ENCODE measurements at regions of chr2 and their contacts with region 1.

Region 1: DNA sequence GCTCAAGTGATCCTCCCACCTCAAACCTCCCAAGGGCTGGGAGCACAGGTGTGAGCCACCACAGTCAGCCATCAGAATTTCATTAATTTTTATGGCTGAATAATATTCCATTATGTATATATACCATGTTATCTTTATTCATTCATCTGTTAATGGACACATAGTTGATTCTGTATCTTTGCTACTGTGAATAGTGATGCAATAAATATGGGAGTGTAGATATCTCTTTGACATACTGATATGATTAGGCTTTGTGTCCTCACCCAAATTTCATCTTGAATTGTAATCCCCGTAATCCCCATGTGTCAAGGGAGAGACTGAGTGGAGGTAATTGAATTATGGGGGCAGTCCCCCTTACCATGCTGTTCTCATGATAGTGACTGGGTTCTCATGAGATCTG is 38.2 kb upstream of the REEP1 start:
- DNase-seq: no peak
- H3K4me3 ChIP-seq: no peak overlapping the region
- H3K27ac ChIP-seq: no peak overlapping the region
- H3K4me1 ChIP-seq: no peaks in the 10 kb centered on the region
- H3K27me3 ChIP-seq: no peaks in the 10 kb centered on the region
- CTCF ChIP-seq: no peak

Region 2: DNA sequence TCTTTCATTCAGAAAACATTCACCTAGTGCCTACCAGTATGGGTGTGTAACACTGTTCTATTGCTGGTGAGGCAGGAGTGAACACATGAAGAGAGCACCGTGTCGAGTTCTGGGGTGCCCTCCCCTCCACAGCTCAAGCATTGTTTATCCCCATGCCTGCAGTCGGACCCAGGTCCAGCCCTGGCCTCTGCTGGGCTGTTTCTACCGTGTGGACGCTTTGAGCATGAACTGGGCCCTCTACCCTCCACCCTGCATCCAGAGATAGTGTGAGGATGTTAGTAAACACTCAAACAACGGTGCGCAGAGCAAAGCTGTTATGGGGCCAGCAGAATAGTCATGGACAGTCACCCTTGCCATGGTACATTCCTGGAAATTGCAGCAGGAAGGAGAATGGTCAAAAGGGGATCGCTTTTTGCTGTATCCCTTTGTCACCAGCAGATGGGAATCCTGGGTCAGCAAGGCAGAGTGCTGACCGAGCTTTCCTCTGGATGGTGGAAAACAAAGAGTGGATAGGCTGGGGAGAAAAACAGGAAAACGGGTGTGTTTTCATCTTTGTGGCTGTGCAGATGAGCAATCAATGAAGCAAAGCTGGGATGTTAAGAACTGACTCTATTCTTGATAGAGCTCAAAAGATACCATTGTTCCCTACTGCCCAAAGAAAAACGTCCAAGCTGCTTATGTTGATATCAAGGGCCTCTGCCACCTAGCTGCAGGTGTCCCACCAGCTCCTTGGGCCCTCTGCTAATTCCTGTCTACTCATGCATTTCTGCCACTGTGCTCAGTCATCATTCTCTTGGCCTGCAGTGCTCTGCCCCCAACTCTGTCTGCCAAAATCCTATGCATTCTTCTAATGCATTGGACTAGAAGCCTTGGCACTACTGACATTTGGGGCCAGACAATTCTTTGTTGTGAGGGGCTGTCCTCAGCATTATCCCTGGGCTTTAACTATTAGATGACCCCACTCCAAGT is 76.9 kb before region 1 on chr2:
- intact Hi-C with region 1: loop called (anchors 2 kb)
- DNase-seq: no peak
- H3K4me3 ChIP-seq: no peak overlapping the region
- H3K27ac ChIP-seq: peak overlapping the region; percentile 70 to 85
- H3K4me1 ChIP-seq: peaks cover 12 to 29% of the 10 kb centered on the region in 2 donors
- H3K27me3 ChIP-seq: no peaks in the 10 kb centered on the region
- CTCF ChIP-seq: peak in 1 of 3 experiments; percentile 36

Region 3: GRCh38 chr2:86414996-86415395 is 39.4 kb after region 1 on chr2:
- intact Hi-C with region 1: no loop called
- DNase-seq: no peak
- H3K4me3 ChIP-seq: no peak overlapping the region
- H3K27ac ChIP-seq: no peak overlapping the region
- H3K4me1 ChIP-seq: no peaks in the 10 kb centered on the region
- H3K27me3 ChIP-seq: no peaks in the 10 kb centered on the region
- CTCF ChIP-seq: no peak